Cardiac septum (tissue), 1 donor: ENCODE measurements at regions of chr7 and their contacts with region 1.

Region 1: GRCh38 chr7:29839302-29839701 is 33.0 kb downstream of the WIPF3 start:
- DNase-seq: no peak

Region 2: DNA sequence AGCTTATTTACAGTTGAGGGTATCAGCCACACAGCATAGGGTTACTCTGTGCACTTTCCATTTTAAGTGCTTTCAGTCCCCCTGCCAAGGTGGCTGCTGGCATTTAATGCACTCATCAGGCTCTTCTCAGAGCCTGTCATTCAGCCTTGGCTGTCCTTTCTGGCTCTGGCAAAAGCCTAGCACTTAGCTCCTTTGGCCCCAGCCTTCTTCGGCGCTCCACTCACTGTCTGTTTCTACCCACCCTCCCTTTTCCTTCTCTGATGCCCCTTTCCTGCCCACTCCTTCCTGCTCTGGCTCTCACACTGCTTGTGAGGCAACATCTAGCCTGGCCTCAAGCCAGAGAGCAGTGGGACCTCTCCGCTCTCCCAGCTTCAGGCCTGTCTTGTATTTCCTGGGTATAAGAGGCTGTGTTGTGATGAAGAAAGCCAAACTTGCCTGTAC is 27.2 kb after region 1 on chr7:
- intact Hi-C with region 1: loop called (anchors 1 kb)
- DNase-seq: no peak